ENCODE measurements at regions of chr16 and their contacts with region 1.

Region 1: GRCh38 chr16:66120656-66121055 is 245.8 kb upstream of the CDH5 start:
- DNase-seq: no peak
- H3K4me3 ChIP-seq: no peak overlapping the region
- H3K27ac ChIP-seq: no peak overlapping the region
- H3K4me1 ChIP-seq: no peaks in the 10 kb centered on the region
- H3K27me3 ChIP-seq: no peaks in the 10 kb centered on the region
- CTCF ChIP-seq: no peak
- POLR2A ChIP-seq: no peak

Region 2: DNA sequence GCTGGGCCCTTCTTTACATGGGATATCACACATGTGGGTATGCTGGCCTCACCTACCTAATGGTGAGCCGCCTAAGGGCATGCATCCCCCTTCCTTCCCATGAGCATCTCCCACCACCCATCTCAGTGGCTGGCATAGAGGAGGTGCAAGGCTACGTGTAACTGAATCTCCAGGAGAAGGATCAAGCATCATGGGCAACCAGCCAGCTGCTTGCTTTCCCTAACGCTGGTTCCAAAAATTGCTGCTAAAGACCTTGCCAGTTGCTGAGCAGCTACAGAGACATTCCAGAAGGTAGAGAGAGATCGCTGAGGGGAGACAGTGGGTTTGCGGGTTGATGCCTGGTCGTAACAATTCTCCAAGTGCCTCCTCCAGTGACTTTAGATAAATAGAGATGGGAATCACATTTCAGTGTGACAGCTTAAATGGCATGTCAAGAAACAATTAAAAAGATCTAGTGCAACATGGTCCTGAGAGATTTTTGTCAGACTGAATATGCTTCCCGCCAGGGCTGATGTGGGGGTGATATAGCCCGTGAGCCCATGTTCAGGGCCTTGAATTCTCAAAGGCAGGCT is 132.5 kb before region 1 on chr16:
- intact Hi-C with region 1: loop called (anchors 5 kb)
- DNase-seq: no peak
- H3K4me3 ChIP-seq: no peak overlapping the region
- H3K27ac ChIP-seq: no peak overlapping the region
- H3K4me1 ChIP-seq: no peaks in the 10 kb centered on the region
- H3K27me3 ChIP-seq: no peaks in the 10 kb centered on the region
- CTCF ChIP-seq: no peak
- POLR2A ChIP-seq: no peak

Region 3: DNA sequence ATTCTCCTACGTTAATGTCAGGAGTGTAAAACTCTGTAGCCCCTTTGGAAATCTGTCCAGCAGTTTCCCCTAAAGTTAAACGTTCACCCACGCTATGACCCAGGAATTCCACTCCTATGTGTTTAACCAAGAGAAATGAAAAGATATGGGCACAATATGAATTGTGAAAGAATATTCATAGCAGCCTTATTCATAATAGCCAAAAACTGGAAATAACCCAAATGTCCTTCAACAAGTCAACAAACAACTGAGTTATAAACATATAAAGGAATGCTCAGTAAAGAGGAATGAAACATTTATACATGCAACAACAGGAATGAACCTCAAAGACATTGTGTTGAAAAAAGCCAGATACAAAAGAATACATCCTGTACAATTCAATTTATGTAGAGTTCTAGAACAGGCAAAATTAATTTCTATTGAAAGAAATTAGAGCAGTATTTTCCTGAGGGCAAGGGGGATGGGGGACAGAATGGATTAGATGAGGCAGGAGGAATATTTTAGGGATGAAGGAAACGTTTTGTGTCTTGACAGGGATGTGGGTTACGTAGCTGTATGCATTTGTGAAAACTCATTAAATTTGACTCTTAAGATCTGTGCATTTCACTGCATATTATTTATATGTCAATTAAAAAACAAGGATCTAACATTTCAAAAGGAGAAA is 40.9 kb before region 1 on chr16:
- intact Hi-C with region 1: no loop called
- DNase-seq: no peak
- H3K4me3 ChIP-seq: no peak overlapping the region
- H3K27ac ChIP-seq: no peak overlapping the region
- H3K4me1 ChIP-seq: no peaks in the 10 kb centered on the region
- H3K27me3 ChIP-seq: no peaks in the 10 kb centered on the region
- CTCF ChIP-seq: no peak
- POLR2A ChIP-seq: no peak

Measured in breast epithelium (tissue), 4 donors.